Calu3 (cell line): ENCODE measurements at regions of chr4 and their contacts with region 1.

Region 1: GRCh38 chr4:189202182-189202868 is 738.3 kb upstream of the FRG1 start:
- DNase-seq: peak; percentile 49
- H3K4me3 Mint-ChIP-seq: peak overlapping the region; percentile 58
- H3K27ac Mint-ChIP-seq: no peak overlapping the region
- H3K4me1 Mint-ChIP-seq: peaks cover 11% of the 10 kb centered on the region
- H3K27me3 Mint-ChIP-seq: peaks cover 12% of the 10 kb centered on the region
- CTCF ChIP-seq: peak; percentile 82

Region 2: DNA sequence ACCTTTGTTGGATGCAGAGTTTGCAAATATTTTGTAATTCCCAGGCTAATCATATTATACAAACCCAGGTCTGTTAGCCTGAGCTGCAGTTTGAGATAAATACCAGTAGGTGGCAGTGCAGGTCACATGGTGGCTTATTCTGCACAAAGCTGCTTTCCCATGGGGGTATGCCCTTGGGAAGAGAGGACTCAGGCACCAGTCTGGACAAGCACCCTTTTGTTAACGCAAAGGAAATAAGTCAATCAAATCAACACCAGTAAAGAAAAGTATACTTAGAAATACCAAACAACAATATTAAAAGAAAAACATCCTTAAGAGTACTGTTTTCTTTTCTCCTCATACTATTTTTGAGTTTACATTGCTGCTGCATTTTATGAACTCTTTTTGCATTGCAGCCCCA is 1595.7 kb before region 1 on chr4:
- CTCF ChIA-PET with region 1: no interaction called
- intact Hi-C with region 1: loop called (anchors 5 kb)
- DNase-seq: peak; percentile 36
- H3K4me3 Mint-ChIP-seq: no peak overlapping the region
- H3K27ac Mint-ChIP-seq: no peak overlapping the region
- H3K4me1 Mint-ChIP-seq: peaks cover 7% of the 10 kb centered on the region
- H3K27me3 Mint-ChIP-seq: no peaks in the 10 kb centered on the region
- CTCF ChIP-seq: peak; percentile 76

Region 3: GRCh38 chr4:188971125-188971524 is 231.2 kb before region 1 on chr4:
- CTCF ChIA-PET with region 1: no interaction called
- intact Hi-C with region 1: loop called (anchors 10 kb)
- DNase-seq: peak; percentile 1
- H3K4me3 Mint-ChIP-seq: no peak overlapping the region
- H3K27ac Mint-ChIP-seq: no peak overlapping the region
- H3K4me1 Mint-ChIP-seq: no peaks in the 10 kb centered on the region
- H3K27me3 Mint-ChIP-seq: no peaks in the 10 kb centered on the region
- CTCF ChIP-seq: no peak

Region 4: DNA sequence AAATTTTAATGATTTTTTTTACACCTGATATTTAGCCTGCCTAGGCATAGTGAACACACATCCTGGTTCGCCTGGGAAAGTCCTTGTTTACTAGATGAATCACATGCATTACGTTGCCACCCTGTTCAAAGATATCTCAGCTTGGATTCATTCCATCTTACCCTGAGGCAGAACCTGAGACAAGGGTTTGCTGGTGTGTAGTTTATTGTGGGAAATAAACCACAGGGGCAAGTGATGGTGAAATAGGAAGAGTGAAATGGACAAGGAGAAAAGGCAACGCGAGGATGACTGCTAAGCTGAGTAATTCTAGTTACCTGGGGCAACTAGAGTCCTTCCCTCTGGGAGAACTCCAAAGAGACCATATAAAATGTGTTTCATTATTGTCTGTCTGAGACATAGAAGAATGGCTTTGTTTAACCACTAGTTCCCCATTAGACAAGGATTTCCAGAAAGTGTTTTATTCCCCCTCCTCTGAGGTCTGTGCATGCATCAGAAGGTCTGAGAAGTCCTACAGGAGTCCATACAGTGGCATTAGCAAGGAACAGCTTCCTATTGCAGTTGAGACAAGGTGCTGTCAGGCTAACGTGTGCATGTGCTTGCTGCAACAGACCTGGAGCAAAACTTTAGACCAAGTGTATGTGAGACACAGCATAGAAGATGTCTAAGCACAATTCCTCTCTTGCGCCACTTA is 58.9 kb before region 1 on chr4:
- CTCF ChIA-PET with region 1: no interaction called
- intact Hi-C with region 1: loop called (anchors 5 kb)
- DNase-seq: peak; percentile 57
- H3K4me3 Mint-ChIP-seq: no peak overlapping the region
- H3K27ac Mint-ChIP-seq: no peak overlapping the region
- H3K4me1 Mint-ChIP-seq: no peaks in the 10 kb centered on the region
- H3K27me3 Mint-ChIP-seq: no peaks in the 10 kb centered on the region
- CTCF ChIP-seq: no peak